ENCODE measurements at regions of chr5 and their contacts with region 1.

Region 1: GRCh38 chr5:35852084-35852734 is 4.5 kb upstream of the IL7R start:
- DNase-seq: peak in 16 of 35 experiments; percentile 4 to 76 (median 33)
- ATAC-seq: peak in 1 of 4 experiments; percentile 3
- H3K4me3 ChIP-seq: peak overlapping the region; percentile 18 to 83
- H3K4me3 Mint-ChIP-seq: peak overlapping the region; percentile 92 to 94 (median 92)
- H3K27ac ChIP-seq: peak overlapping the region; percentile 99
- H3K27ac Mint-ChIP-seq: peak overlapping the region; percentile 99 to 100
- H3K4me1 ChIP-seq: peaks cover 50 to 55% of the 10 kb centered on the region in 2 experiments
- H3K4me1 Mint-ChIP-seq: peaks cover 68 to 80% (median 79%) of the 10 kb centered on the region in 3 donors
- H3K27me3 ChIP-seq: no peaks in the 10 kb centered on the region
- H3K27me3 Mint-ChIP-seq: no peaks in the 10 kb centered on the region

Region 2: GRCh38 chr5:35777358-35778087 is 74.7 kb before region 1 on chr5:
- CTCF ChIA-PET with region 1: interaction called, 7 to 58 read pairs
- POLR2A ChIA-PET with region 1: interaction called, 6 to 75 read pairs
- DNase-seq: peak; percentile 39 to 91 (median 68)
- ATAC-seq: peak; percentile 41 to 67 (median 50)
- H3K4me3 ChIP-seq: peak overlapping the region in 1 of 2 donors; percentile 3
- H3K4me3 Mint-ChIP-seq: peak overlapping the region; percentile 33 to 65 (median 40)
- H3K27ac ChIP-seq: peak overlapping the region; percentile 58
- H3K27ac Mint-ChIP-seq: peak overlapping the region; percentile 89 to 95
- H3K4me1 ChIP-seq: peaks cover 16 to 37% of the 10 kb centered on the region in 2 experiments
- H3K4me1 Mint-ChIP-seq: peaks cover 73 to 77% (median 75%) of the 10 kb centered on the region in 3 donors
- H3K27me3 ChIP-seq: no peaks in the 10 kb centered on the region
- H3K27me3 Mint-ChIP-seq: no peaks in the 10 kb centered on the region

Region 3: DNA sequence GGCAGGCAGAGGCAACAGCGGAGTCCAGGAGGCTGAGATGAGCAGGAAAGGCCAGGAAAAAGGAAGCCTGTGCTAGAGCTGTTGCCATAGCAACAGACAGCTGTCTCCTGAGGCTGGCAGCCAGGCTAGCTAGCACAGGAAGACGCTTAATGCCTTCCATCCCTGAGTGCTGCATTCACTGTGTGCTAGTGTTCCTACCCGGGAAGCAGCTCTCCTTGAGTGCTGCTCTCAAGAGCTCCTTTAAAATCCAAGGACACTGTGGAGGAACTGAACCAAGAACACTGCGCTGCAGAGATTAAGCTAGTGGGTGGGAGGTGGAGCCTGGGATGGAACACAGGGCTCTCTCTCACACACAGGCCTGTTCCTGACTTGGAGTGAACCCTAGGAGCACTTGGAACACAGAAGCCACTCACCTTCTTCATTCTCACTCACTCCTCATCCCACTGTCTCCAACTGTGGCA is 49.0 kb before region 1 on chr5:
- CTCF ChIA-PET with region 1: interaction called in 1 of 2 experiments, 3 read pairs
- POLR2A ChIA-PET with region 1: interaction called in 1 of 2 experiments, 11 read pairs
- DNase-seq: peak in 4 of 35 experiments; percentile 20 to 58 (median 32)
- ATAC-seq: peak; percentile 55 to 76 (median 67)
- H3K4me3 ChIP-seq: peak overlapping the region in 1 of 2 donors; percentile 33
- H3K4me3 Mint-ChIP-seq: peak overlapping the region; percentile 1 to 42 (median 14)
- H3K27ac ChIP-seq: peak overlapping the region; percentile 11
- H3K27ac Mint-ChIP-seq: peak overlapping the region; percentile 84 to 87
- H3K4me1 ChIP-seq: peaks cover 32 to 39% of the 10 kb centered on the region in 2 experiments
- H3K4me1 Mint-ChIP-seq: peaks cover 73 to 86% (median 78%) of the 10 kb centered on the region in 3 donors
- H3K27me3 ChIP-seq: no peaks in the 10 kb centered on the region
- H3K27me3 Mint-ChIP-seq: no peaks in the 10 kb centered on the region

Region 4: GRCh38 chr5:35822511-35822910 is 29.7 kb before region 1 on chr5:
- CTCF ChIA-PET with region 1: interaction called in 1 of 2 experiments, 10 read pairs
- POLR2A ChIA-PET with region 1: interaction called, 15 to 85 read pairs
- DNase-seq: peak; percentile 34 to 87 (median 63)
- ATAC-seq: peak; percentile 81 to 86 (median 85)
- H3K4me3 ChIP-seq: peak overlapping the region; percentile 4 to 40
- H3K4me3 Mint-ChIP-seq: peak overlapping the region; percentile 55 to 69 (median 65)
- H3K27ac ChIP-seq: peak overlapping the region; percentile 79
- H3K27ac Mint-ChIP-seq: peak overlapping the region; percentile 97 to 99
- H3K4me1 ChIP-seq: peaks cover 78 to 87% of the 10 kb centered on the region in 2 experiments
- H3K4me1 Mint-ChIP-seq: peaks cover 88 to 91% (median 89%) of the 10 kb centered on the region in 3 donors
- H3K27me3 ChIP-seq: no peaks in the 10 kb centered on the region
- H3K27me3 Mint-ChIP-seq: no peaks in the 10 kb centered on the region

Region 5: GRCh38 chr5:35863159-35863558 is 10.9 kb after region 1 on chr5:
- CTCF ChIA-PET with region 1: interaction called, 3 read pairs
- POLR2A ChIA-PET with region 1: interaction called in 1 of 2 experiments, 26 read pairs
- DNase-seq: peak in 1 of 35 experiments; percentile 10
- ATAC-seq: peak in 1 of 4 experiments; percentile 20
- H3K4me3 ChIP-seq: peak overlapping the region; percentile 83 to 94
- H3K4me3 Mint-ChIP-seq: peak overlapping the region; percentile 92 to 97 (median 92)
- H3K27ac ChIP-seq: peak overlapping the region; percentile 99
- H3K27ac Mint-ChIP-seq: peak overlapping the region; percentile 90 to 98
- H3K4me1 ChIP-seq: peaks cover 20 to 55% of the 10 kb centered on the region in 2 experiments
- H3K4me1 Mint-ChIP-seq: peaks cover 64 to 85% (median 76%) of the 10 kb centered on the region in 3 donors
- H3K27me3 ChIP-seq: no peaks in the 10 kb centered on the region
- H3K27me3 Mint-ChIP-seq: no peaks in the 10 kb centered on the region

Region 6: DNA sequence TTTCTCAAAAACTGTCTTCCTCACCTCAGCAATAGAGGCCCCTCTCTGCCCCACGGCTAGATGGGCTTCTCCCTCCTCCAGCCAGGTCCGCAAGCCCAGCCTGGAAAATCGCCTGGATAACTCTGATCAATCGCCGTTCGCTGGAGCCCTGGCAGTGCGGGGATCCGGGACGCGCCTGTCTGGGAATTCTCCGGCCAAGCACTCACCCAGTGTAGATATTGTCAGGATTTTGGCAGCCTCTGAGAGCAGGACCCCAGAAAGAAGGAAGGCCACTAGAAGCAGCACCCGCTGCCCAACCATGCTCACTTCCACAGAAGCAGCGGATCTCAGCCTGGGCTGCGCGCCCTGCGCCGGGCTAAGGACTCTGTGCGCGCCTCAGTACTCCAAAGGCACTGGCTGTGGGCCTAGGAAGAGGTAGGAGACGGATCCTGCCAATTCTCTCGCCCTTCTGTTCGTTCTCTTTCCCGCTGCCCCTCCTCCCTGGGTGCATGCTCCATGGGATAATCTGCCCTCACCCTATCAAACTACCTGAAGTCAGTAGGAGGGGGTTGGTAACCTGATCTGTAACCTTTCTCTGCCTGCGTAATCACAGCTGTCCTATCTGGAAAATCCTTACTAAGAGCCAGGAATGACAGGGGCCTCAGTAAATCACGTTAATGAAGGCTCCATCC is 138.9 kb after region 1 on chr5 and contains the start of gene UGT3A1:
- CTCF ChIA-PET with region 1: no interaction called
- POLR2A ChIA-PET with region 1: no interaction called
- DNase-seq: no peak
- ATAC-seq: no peak
- H3K4me3 ChIP-seq: no peak within 1 kb of the TSS
- H3K4me3 Mint-ChIP-seq: no peak within 1 kb of the TSS
- H3K27ac ChIP-seq: no peak within 1 kb of the TSS
- H3K27ac Mint-ChIP-seq: no peak within 1 kb of the TSS
- H3K4me1 ChIP-seq: no peaks in the 10 kb centered on the region
- H3K4me1 Mint-ChIP-seq: no peaks in the 10 kb centered on the region
- H3K27me3 ChIP-seq: peaks cover 5 to 11% of the 10 kb centered on the region in 2 experiments
- H3K27me3 Mint-ChIP-seq: peaks cover 13 to 34% of the 10 kb centered on the region in 2 donors
- total RNA-seq, gene UGT3A1: not detected